ENCODE measurements at regions of chr7 and their contacts with region 1.

Region 1: GRCh38 chr7:108497082-108497725 is 28.7 kb downstream of the PNPLA8 start:
- DNase-seq: peak in 1 of 2 donors; percentile 36
- ATAC-seq: peak; percentile 48

Region 2: GRCh38 chr7:108181073-108181985 is 315.9 kb before region 1 on chr7:
- intact Hi-C with region 1: loop called in 1 of 2 experiments (anchors 5 kb)
- DNase-seq: no peak
- ATAC-seq: peak; percentile 53

Region 3: GRCh38 chr7:108839076-108839475 is 341.9 kb after region 1 on chr7:
- intact Hi-C with region 1: no loop called
- DNase-seq: no peak
- ATAC-seq: no peak

Measured in left colon (tissue), 2 donors.